ENCODE measurements at regions of chr16 and their contacts with region 1.

Region 1: GRCh38 chr16:12896562-12896961 is 4.8 kb upstream of the SHISA9 start:
- DNase-seq: peak; percentile 27
- CTCF ChIP-seq: peak; percentile 54

Region 2: DNA sequence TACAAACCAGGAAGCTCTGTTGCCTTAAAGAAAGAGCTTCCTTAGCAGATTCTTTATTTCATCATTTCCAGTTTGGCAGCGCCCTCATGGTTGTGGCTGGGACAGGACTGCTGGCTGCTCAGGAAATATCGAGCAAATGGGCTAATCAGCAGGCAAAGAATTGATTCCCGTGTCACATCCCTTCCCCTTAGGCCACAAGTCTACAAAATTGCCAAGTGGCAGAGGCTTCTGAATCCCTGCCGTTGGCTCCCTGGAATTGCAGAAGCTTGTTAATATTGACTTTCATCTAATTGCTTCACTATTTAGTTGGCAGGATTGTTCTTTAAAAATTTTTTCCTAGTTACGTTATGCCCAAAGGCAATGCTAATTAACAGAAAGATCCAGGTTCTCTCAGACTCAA is 567.1 kb after region 1 on chr16:
- in situ Hi-C with region 1: loop called (anchors 10 kb)
- DNase-seq: no peak
- CTCF ChIP-seq: no peak

Measured in GM13976 (cell line).